Activated naive CD4-positive, alpha-beta T cell treated with anti-CD3 and anti-CD28 coated beads for 36 hours (primary cell): ENCODE measurements at regions of chr16 and their contacts with region 1.

Region 1: DNA sequence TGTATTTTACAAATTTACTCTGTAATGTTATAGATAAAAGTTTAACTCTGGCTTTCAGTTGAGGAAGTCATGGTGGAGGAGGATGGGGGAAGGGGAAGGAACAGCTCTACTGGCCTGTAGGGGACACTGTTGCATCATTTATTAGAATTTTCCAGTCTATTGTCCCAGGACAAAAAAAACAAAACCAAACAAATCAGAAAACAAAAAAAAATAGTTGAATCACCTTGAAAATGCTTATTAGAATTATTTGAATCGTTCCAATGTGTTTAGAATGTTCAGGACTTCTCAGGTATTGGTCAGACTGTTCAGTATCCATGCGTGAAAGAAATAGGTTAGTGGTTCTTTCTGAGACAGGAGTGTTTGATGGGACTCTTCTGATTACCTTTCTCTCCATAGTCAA is 242.0 kb downstream of the FTO start:
- DNase-seq: no peak
- H3K4me3 Mint-ChIP-seq: no peak overlapping the region
- H3K27ac Mint-ChIP-seq: no peak overlapping the region
- H3K4me1 Mint-ChIP-seq: peaks cover 6% of the 10 kb centered on the region
- H3K27me3 Mint-ChIP-seq: no peaks in the 10 kb centered on the region

Region 2: DNA sequence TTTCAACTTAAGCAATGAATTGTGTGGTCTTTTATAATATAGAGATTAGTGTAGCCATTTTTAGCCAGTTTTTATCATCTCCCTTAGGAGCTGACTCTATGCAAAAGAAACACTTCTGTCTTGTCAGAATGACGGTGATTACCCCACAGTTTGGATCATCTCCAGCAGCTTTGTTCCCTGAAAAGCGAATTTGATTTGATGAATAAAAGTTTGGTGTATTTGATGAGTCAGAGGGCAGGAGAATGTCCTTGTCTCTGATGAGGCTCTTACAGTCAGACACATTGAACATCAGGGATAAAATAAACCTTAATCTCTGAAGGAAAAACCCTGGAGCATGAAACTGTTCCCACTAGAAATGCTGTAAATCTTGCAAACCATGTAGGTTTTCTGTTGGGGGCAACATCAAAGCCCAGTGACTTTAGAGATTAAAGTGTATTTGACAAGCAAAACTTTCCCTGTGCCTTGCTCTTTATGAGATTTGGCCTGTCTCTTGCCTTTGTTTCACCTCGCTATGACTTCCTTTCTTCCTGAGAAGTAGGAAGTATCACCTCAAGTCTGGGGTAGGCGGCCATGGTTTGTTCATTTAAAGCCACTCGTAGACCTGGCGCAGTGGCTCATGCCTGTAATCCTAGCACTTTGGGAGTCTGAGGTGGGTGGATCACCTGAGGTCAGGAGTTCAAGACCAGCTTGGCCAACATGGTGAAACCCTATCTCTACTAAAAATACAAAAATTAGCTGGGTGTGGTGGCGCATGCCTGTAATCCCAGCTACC is 32.7 kb before region 1 on chr16:
- CTCF ChIA-PET with region 1: no interaction called
- intact Hi-C with region 1: loop called (anchors 2 kb)
- DNase-seq: peak; percentile 42
- H3K4me3 Mint-ChIP-seq: peak overlapping the region; percentile 23
- H3K27ac Mint-ChIP-seq: peak overlapping the region; percentile 79
- H3K4me1 Mint-ChIP-seq: peaks cover 8% of the 10 kb centered on the region
- H3K27me3 Mint-ChIP-seq: no peaks in the 10 kb centered on the region

Region 3: GRCh38 chr16:54040975-54041374 is 95.0 kb after region 1 on chr16:
- CTCF ChIA-PET with region 1: no interaction called
- intact Hi-C with region 1: no loop called
- DNase-seq: no peak
- H3K4me3 Mint-ChIP-seq: no peak overlapping the region
- H3K27ac Mint-ChIP-seq: no peak overlapping the region
- H3K4me1 Mint-ChIP-seq: no peaks in the 10 kb centered on the region
- H3K27me3 Mint-ChIP-seq: no peaks in the 10 kb centered on the region

Region 4: DNA sequence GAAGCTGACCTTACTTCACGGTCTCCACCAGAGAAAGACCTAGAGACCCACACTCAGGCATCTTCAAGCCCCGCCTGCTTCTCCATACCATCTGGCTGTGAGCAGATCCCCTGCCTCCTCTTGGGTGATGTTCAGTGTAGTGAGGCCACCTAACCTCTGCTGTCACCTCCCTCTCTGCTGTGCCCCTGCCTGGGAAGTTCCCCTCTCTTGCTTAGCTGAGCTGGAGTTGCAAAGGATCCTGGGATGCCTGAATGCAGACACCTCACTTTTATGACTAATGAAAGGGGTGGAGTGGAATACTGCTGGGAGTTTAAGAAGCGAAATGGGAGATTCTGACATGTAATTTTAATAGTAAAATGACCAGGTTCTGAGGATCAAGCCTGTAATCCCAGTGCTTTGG is 334.8 kb after region 1 on chr16:
- CTCF ChIA-PET with region 1: no interaction called
- intact Hi-C with region 1: loop called (anchors 2 kb)
- DNase-seq: peak; percentile 27
- H3K4me3 Mint-ChIP-seq: no peak overlapping the region
- H3K27ac Mint-ChIP-seq: no peak overlapping the region
- H3K4me1 Mint-ChIP-seq: peaks cover 23% of the 10 kb centered on the region
- H3K27me3 Mint-ChIP-seq: peaks cover 54% of the 10 kb centered on the region

Region 5: DNA sequence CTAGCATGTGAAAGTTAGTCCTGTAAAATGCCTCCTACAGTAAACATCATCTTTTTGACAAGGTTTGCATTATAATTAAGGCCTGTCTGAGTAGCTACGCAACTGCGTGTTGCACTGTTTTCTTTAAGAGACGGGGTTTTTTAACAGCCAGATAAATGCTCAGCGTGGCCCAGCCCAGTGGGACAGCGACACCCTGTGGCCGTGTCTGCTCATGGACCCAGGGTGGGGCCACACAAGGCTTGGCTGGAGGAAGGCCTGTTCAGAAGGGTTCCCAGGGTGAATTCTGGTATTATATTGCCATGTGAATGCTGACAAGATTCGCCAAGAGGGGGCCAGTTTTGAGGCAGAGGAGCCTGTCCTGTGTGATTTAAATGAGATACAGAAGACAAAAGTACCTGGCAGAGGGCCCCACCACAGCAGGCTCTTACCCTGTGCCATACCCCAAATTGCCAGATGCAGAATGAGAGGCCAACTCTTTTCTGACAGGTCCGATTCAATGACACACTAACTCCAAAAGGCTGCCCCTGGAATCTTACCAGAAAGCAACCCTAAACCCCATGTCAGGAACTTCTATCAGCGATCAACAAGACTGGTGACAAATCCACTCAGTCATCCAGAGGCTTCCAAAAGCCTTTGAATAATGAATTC is 1312.1 kb after region 1 on chr16:
- CTCF ChIA-PET with region 1: no interaction called
- intact Hi-C with region 1: loop called (anchors 5 kb)
- DNase-seq: peak; percentile 69
- H3K4me3 Mint-ChIP-seq: no peak overlapping the region
- H3K27ac Mint-ChIP-seq: no peak overlapping the region
- H3K4me1 Mint-ChIP-seq: peaks cover 2% of the 10 kb centered on the region
- H3K27me3 Mint-ChIP-seq: peaks cover 11% of the 10 kb centered on the region

Region 6: GRCh38 chr16:55577887-55578286 is 1631.9 kb after region 1 on chr16:
- CTCF ChIA-PET with region 1: no interaction called
- intact Hi-C with region 1: no loop called
- DNase-seq: no peak
- H3K4me3 Mint-ChIP-seq: no peak overlapping the region
- H3K27ac Mint-ChIP-seq: no peak overlapping the region
- H3K4me1 Mint-ChIP-seq: no peaks in the 10 kb centered on the region
- H3K27me3 Mint-ChIP-seq: peaks cover 3% of the 10 kb centered on the region